SK-N-SH (cell line): ENCODE measurements at regions of chr2 and their contacts with region 1.

Region 1: DNA sequence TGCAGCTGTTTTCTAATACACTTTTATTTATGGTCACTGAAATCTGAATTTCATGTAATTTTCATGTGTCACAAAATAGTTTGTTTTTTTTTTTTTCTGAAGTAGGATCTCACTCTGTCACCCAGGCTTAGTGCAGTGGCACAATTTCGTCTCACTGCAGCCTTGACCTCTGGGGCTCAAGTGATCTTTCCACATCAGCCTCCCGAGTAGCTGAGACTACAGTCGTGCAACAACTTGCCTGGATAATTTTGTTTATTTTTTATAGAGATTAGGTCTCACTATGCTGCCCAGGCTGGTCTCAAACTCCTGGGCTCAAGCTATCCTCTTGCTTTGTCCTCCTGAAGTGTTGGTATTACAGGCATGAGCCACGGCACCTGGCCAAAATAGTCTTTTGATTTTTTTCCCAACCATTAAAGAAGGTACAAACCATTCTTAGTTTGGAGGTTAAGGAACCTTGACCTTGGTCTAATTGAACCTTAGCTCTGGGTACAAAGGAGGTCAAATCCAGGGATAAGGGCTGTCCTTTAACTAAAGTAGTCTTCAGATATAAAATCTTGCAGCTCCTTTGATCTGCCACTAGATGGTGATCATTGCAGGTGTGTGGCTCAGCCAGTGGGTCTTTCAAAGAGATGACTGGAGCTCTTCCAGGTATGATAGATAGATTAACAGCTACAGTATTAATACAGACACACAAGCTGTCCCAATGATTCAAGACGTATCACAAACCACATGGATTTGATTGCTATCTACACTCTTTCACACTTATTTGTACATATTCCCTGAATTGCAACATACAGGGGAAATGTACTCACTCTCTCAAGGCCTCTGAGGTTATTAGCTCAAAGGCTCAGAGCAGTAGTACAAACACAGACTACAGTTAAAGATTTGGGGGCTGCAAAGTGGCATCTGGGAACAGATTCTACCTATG is 4.7 kb upstream of the KRCC1 start:
- DNase-seq: peak; percentile 71
- H3K4me3 ChIP-seq: peak overlapping the region in 1 of 2 experiments; percentile 6; a peak in 1 of 4 replicates
- H3K27ac ChIP-seq: no peak overlapping the region
- H3K4me1 ChIP-seq: peaks cover 0 to 5% of the 10 kb centered on the region in 2 experiments; a peak in 2 of 4 replicates
- H3K27me3 ChIP-seq: no peaks in the 10 kb centered on the region
- CTCF ChIP-seq: peak; percentile 84
- EP300 ChIP-seq: no peak
- RAD21 ChIP-seq: peak; percentile 93

Region 2: DNA sequence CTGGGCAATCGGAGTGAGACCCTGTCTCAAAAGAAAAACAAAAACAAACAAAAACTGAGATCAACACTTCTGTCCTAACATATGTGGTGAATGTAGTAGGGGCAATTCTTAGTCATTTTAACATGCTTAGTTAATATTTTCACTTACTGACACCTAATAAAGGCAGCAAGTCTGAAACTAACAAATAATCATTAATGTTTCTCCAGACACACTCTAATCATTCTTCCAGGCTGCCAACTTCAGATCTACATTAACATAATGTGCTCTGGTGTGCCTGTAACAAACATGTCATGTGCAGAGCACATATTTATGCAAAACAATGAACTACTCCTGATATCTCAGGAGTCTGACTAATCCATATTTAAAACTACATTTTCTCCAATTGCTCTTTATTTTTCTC is 10.6 kb before region 1 on chr2:
- CTCF ChIA-PET with region 1: interaction called, 18 read pairs
- POLR2A ChIA-PET with region 1: no interaction called
- DNase-seq: no peak
- H3K4me3 ChIP-seq: no peak overlapping the region
- H3K27ac ChIP-seq: no peak overlapping the region
- H3K4me1 ChIP-seq: peaks cover 10 to 15% of the 10 kb centered on the region in 2 experiments
- H3K27me3 ChIP-seq: no peaks in the 10 kb centered on the region
- CTCF ChIP-seq: no peak
- EP300 ChIP-seq: no peak
- RAD21 ChIP-seq: no peak

Region 3: DNA sequence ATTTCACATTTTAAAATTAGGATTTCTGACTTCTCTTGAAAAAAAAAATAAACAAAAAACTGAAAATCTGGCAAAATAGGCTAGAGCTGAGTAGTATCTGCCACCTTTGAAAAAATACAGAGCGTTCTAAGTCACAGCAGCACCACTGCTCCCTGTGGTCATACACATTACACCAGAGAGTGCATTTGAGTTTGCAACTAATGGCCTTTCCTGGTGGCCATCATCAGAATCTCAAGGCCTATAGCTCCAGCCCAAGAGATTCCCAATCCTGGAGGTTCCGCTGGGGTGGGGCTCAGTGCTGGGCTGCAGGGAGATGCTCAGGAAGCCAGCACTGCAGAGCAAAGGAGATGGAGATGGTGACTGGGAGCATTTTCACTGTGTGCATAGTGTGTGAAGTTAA is 24.9 kb after region 1 on chr2:
- CTCF ChIA-PET with region 1: interaction called, 13 read pairs
- POLR2A ChIA-PET with region 1: no interaction called
- DNase-seq: no peak
- H3K4me3 ChIP-seq: no peak overlapping the region
- H3K27ac ChIP-seq: no peak overlapping the region
- H3K4me1 ChIP-seq: no peaks in the 10 kb centered on the region; a peak in 1 of 4 replicates
- H3K27me3 ChIP-seq: no peaks in the 10 kb centered on the region
- CTCF ChIP-seq: no peak
- EP300 ChIP-seq: no peak
- RAD21 ChIP-seq: no peak

Region 4: GRCh38 chr2:88159955-88160415 is 99.7 kb after region 1 on chr2:
- CTCF ChIA-PET with region 1: interaction called, 147 read pairs
- POLR2A ChIA-PET with region 1: no interaction called
- DNase-seq: peak; percentile 75
- H3K4me3 ChIP-seq: peak overlapping the region in 1 of 2 experiments; percentile 21; a peak in 1 of 4 replicates
- H3K27ac ChIP-seq: no peak overlapping the region
- H3K4me1 ChIP-seq: no peaks in the 10 kb centered on the region
- H3K27me3 ChIP-seq: no peaks in the 10 kb centered on the region
- CTCF ChIP-seq: peak; percentile 92
- EP300 ChIP-seq: peak in 1 of 2 experiments; percentile 19; a peak in 1 of 4 replicates
- RAD21 ChIP-seq: peak; percentile 94

Region 5: GRCh38 chr2:88181511-88181910 is 121.3 kb after region 1 on chr2:
- CTCF ChIA-PET with region 1: interaction called, 22 read pairs
- POLR2A ChIA-PET with region 1: no interaction called
- DNase-seq: no peak
- H3K4me3 ChIP-seq: no peak overlapping the region
- H3K27ac ChIP-seq: no peak overlapping the region
- H3K4me1 ChIP-seq: no peaks in the 10 kb centered on the region; a peak in 1 of 4 replicates
- H3K27me3 ChIP-seq: no peaks in the 10 kb centered on the region
- CTCF ChIP-seq: no peak
- EP300 ChIP-seq: no peak
- RAD21 ChIP-seq: no peak

Region 6: DNA sequence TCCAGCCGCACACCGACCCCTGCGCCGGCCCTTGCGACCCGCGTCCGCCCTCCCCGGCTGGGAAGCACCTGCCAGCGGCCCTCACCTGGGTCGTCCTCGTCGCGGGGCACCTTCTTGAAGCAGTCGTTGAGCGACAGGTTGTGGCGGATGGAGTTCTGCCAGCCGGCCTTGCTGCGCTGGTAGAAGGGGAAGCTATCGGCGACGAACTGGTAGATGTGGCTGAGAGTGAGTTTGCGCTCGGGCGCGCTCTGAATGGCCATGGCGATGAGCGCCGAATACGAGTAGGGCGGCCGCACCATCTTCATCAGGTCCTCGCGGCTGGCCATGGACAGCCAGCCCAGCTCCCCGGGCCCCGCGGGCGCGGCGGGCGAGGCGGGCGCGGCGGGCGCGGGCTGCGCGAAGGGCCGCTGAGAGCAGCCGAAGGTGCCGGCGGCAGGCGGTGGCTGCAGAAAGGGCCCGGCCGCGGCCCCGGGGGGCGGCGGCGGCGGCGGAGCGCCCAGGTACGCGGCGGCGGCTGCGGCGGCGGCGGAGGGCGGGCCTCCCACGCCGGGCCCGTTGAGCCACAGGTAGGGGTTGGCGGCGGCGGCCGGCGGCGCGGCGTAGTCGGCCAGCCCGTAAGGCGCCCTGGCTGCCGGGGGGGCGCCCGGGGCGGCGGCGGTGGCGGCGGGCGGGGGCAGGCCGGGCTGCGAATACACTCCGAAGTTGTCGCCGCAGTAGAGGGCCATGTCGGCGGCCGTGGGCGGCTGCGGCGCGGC is 391.7 kb after region 1 on chr2:
- CTCF ChIA-PET with region 1: interaction called, 17 read pairs
- POLR2A ChIA-PET with region 1: no interaction called
- DNase-seq: peak; percentile 73
- H3K4me3 ChIP-seq: peak overlapping the region in 1 of 2 experiments; percentile 46; a peak in 2 of 4 replicates
- H3K27ac ChIP-seq: no peak overlapping the region
- H3K4me1 ChIP-seq: peaks cover 0 to 2% of the 10 kb centered on the region in 2 experiments; a peak in 1 of 4 replicates
- H3K27me3 ChIP-seq: peaks cover 41% of the 10 kb centered on the region; the same call in 1 of the 2 replicates
- CTCF ChIP-seq: no peak
- EP300 ChIP-seq: no peak
- RAD21 ChIP-seq: no peak